ENCODE measurements at regions of chr4 and their contacts with region 1.

Region 1: GRCh38 chr4:38782452-38783108 is at the start of gene TLR10:
- DNase-seq: peak in 7 of 9 donors; percentile 10 to 56 (median 43)
- ATAC-seq: peak; percentile 79
- H3K4me3 ChIP-seq: no peak within 1 kb of the TSS
- H3K4me3 Mint-ChIP-seq: peak within 1 kb of the TSS in 3 of 10 donors; percentile 3 to 58 (median 49)
- H3K27ac ChIP-seq: no peak within 1 kb of the TSS
- H3K27ac Mint-ChIP-seq: no peak within 1 kb of the TSS
- H3K4me1 ChIP-seq: no peaks in the 10 kb centered on the region
- H3K4me1 Mint-ChIP-seq: peaks cover 0 to 7% (median 6%) of the 10 kb centered on the region in 7 donors
- H3K27me3 ChIP-seq: no peaks in the 10 kb centered on the region
- H3K27me3 Mint-ChIP-seq: peaks cover 0 to 8% (median 0%) of the 10 kb centered on the region in 5 donors
- total RNA-seq, gene TLR10: 0.13 to 1.6 (median 0.58) TPM in 4 of 5 experiments, not detected in the other

Region 2: DNA sequence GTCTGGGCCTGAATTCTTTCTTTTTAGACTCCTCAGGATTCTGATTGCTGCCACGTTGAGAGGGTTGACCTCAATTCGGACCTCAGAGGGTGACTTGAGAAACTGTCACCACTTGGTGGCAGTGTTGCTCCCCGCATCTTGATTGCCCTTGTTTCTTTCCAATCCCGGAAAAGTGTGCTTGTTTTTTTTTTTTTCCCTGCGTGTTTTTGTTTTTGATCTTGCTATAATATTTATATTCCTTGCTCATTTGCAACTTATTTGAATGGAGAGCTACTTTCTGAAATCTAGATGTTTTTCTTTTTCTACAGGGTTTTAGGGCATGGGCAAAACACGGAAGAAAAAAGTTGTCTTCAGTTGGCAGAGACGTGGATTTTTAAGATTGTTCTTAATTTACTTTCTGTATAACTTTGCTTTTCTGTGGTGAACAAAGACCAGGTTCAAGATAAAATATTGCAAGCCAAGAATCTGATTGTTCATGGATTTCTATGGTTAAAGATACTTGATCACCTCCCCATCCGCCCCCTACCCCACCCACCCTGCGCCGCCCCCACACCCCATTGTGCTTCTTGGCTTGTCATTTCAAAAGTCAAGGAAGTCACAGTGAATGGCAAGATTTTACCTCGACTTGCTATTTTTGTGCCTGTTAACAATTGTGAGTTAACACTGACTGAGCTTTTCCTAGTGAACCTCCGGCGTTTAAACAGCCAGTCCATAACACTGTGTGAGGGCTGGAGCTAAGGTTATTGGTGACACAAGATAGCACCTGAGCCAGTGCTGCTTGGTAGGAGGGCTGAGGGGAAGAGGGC is 720.3 kb before region 1 on chr4:
- CTCF ChIA-PET with region 1: interaction called, 19 read pairs
- POLR2A ChIA-PET with region 1: interaction called, 3 read pairs
- intact Hi-C with region 1: loop called in 1 of 2 experiments (anchors 1 kb)
- DNase-seq: peak; percentile 15 to 55 (median 41)
- ATAC-seq: peak; percentile 78
- H3K4me3 ChIP-seq: peak overlapping the region; percentile 33
- H3K4me3 Mint-ChIP-seq: peak overlapping the region; percentile 66 to 95 (median 84)
- H3K27ac ChIP-seq: no peak overlapping the region
- H3K27ac Mint-ChIP-seq: peak overlapping the region in 8 of 9 donors; percentile 35 to 80 (median 61)
- H3K4me1 ChIP-seq: no peaks in the 10 kb centered on the region
- H3K4me1 Mint-ChIP-seq: peaks cover 0 to 20% (median 10%) of the 10 kb centered on the region in 7 donors
- H3K27me3 ChIP-seq: no peaks in the 10 kb centered on the region
- H3K27me3 Mint-ChIP-seq: no peaks in the 10 kb centered on the region

Region 3: DNA sequence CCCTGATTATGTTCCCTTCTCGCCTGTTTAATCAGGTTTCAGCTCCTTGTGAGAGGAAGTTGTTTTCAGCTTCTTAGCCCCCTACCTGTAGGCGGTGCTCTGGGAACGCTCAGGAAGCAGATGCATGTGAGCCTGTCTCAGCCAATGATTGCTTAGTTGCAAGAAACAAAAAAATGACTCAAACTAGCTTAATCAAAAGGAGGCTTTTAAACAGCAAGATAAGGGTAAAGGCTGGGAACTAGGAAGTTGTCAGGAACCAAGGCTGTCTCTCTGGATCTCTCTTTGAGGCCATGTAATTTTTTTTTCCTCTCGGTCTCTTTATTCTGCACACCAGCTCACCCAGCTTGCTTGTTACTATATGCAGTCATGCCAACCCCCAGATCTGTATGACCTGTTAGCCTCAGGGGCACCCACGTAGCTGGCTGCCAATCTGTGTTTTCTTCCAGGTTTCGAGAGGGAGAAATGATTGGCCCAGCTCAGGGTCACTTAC is 713.3 kb before region 1 on chr4:
- CTCF ChIA-PET with region 1: interaction called, 11 read pairs
- POLR2A ChIA-PET with region 1: no interaction called
- intact Hi-C with region 1: no loop called
- DNase-seq: peak in 6 of 9 donors; percentile 16 to 53 (median 38)
- ATAC-seq: peak; percentile 86
- H3K4me3 ChIP-seq: no peak overlapping the region
- H3K4me3 Mint-ChIP-seq: no peak overlapping the region
- H3K27ac ChIP-seq: no peak overlapping the region
- H3K27ac Mint-ChIP-seq: peak overlapping the region in 1 of 9 donors; percentile 12
- H3K4me1 ChIP-seq: no peaks in the 10 kb centered on the region
- H3K4me1 Mint-ChIP-seq: peaks cover 9 to 29% (median 18%) of the 10 kb centered on the region in 7 donors
- H3K27me3 ChIP-seq: no peaks in the 10 kb centered on the region
- H3K27me3 Mint-ChIP-seq: no peaks in the 10 kb centered on the region

Region 4: DNA sequence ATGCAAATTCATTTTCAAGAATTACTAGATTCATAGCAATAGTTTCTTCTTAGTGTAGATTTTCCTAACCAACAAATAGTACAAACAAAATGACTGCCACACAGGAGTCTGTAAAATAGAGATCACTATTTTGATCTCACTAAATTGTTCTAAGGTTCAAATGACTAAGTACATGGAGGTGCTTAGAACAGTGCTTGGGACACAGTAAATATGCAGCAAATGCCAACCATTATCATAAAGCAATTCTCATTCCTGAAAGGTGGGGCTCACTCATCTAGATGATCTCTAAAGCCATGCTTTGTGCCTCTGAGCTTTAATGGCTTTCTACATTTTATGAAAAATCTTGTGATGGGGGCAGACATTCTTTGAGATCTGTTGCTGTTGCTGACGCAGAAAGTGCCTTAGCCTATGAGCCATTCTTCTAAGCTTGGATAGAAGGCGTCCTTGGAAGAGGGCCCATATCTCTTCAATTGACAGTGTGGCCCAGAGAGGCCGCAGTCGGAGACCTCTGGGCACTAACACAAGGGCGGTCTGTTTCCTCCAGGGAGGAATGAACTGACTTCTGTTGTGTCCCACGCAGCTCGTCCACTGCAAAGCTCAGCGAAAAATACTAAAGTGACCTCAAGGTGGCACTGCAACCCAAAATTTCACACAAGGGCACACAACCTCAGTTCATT is 23.3 kb before region 1 on chr4:
- CTCF ChIA-PET with region 1: interaction called, 50 read pairs
- POLR2A ChIA-PET with region 1: interaction called, 3 read pairs
- intact Hi-C with region 1: loop called (anchors 1 kb)
- DNase-seq: peak; percentile 29 to 66 (median 58)
- ATAC-seq: peak; percentile 64
- H3K4me3 ChIP-seq: no peak overlapping the region
- H3K4me3 Mint-ChIP-seq: no peak overlapping the region
- H3K27ac ChIP-seq: no peak overlapping the region
- H3K27ac Mint-ChIP-seq: peak overlapping the region in 2 of 9 donors; percentile 10 to 41
- H3K4me1 ChIP-seq: peaks cover 0 to 5% of the 10 kb centered on the region in 2 donors
- H3K4me1 Mint-ChIP-seq: peaks cover 8 to 31% (median 19%) of the 10 kb centered on the region in 7 donors
- H3K27me3 ChIP-seq: no peaks in the 10 kb centered on the region
- H3K27me3 Mint-ChIP-seq: no peaks in the 10 kb centered on the region

Measured in naive thymus-derived CD4-positive, alpha-beta T cell (primary cell).